Activated naive CD4-positive, alpha-beta T cell treated with anti-CD3 and anti-CD28 coated beads, Interleukin-2, amount 10 ng/mL, durations not matched to agents 7 days and 5 days (primary cell): ENCODE measurements at regions of chr1 and their contacts with region 1.

Region 1: DNA sequence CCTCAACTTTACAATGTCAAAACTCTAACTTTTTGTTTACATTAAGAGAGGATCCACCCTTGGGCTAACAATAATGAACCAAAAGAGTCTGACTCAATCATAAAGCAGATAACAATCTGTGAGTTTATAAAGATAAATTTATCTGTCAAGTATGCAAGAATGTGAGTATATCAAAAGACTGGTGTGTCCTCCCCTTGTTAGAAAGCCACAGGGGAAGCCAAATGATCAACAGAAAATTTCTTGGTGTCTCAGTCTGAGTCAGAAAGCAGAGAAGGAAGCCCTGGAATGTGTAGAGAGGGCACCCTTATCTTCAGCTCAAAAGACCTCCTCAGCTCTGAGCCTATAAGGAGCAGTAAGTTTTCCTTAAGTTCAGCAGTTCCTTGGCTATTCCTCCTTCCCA is 13.9 kb upstream of the PDIK1L start:
- DNase-seq: no peak
- H3K4me3 Mint-ChIP-seq: no peak overlapping the region
- H3K27ac Mint-ChIP-seq: no peak overlapping the region
- H3K4me1 Mint-ChIP-seq: peaks cover 6% of the 10 kb centered on the region
- H3K27me3 Mint-ChIP-seq: peaks cover 53% of the 10 kb centered on the region

Region 2: DNA sequence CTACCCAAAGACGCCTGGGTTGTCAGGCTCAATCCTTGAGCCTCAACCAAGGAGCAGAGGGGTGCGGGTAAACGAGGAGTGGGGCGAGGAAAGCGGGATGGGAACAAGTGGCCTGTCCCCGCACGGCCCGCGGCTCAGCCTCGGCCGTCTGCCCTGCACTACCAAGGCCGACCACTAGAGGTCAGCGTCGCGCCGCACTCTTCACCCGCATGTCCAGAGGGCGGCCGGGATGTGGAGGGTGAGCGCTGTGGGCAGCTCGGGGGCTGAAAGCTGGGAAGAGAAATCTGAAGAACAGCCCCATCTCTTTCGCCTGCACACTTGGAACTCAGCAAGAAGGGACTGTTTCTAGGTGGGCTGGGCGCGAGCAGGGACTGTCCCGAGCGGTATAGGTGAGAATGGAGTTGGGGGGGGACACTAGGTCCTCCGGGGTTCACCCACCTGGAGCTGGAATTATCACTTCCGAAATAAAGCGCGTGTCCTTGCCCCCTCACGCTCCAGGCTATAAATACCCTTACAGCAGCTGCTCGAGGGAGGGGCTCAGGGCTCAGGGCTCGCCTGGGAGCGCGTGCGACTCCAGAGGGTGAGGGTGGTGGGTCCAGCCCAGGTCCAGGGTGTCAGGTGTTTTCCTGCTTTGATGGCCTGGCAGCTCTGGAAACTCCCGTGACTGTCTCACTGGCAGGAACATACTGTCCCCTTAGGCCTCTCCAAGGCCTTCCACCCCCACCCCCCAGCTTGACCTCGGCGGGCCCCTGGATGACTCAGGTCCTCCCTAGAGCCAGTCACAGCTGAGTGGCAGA is 61.5 kb before region 1 on chr1:
- CTCF ChIA-PET with region 1: interaction called, 13 read pairs
- DNase-seq: peak; percentile 82
- H3K4me3 Mint-ChIP-seq: peak overlapping the region; percentile 92
- H3K27ac Mint-ChIP-seq: peak overlapping the region; percentile 75
- H3K4me1 Mint-ChIP-seq: peaks cover 15% of the 10 kb centered on the region
- H3K27me3 Mint-ChIP-seq: peaks cover 83% of the 10 kb centered on the region

Region 3: GRCh38 chr1:26161415-26162219 is 63.9 kb after region 1 on chr1:
- CTCF ChIA-PET with region 1: interaction called, 13 read pairs
- DNase-seq: peak; percentile 69
- H3K4me3 Mint-ChIP-seq: peak overlapping the region; percentile 52
- H3K27ac Mint-ChIP-seq: no peak overlapping the region
- H3K4me1 Mint-ChIP-seq: peaks cover 32% of the 10 kb centered on the region
- H3K27me3 Mint-ChIP-seq: peaks cover 92% of the 10 kb centered on the region

Region 4: DNA sequence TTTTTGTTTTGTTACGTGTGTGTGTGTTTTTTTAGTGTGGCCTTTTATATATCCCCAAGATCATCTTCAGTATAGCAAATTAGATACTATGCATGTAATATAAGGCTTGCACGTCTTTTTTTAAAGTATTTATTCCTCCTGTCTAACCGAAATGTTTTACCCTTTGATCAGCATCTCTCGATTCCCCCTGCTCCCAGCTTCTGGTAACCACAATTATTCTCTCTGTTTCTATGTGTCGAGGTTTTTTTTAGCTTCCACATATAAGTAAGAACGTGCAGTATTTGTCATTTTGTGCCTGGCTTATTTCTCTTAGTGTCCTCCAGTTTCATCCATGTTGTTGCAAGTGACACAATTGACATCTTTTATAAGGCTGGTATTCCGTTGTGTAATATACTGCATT is 155.0 kb after region 1 on chr1:
- CTCF ChIA-PET with region 1: no interaction called
- DNase-seq: no peak
- H3K4me3 Mint-ChIP-seq: no peak overlapping the region
- H3K27ac Mint-ChIP-seq: no peak overlapping the region
- H3K4me1 Mint-ChIP-seq: no peaks in the 10 kb centered on the region
- H3K27me3 Mint-ChIP-seq: no peaks in the 10 kb centered on the region

Region 5: GRCh38 chr1:26321315-26322041 is 223.8 kb after region 1 on chr1:
- CTCF ChIA-PET with region 1: no interaction called
- DNase-seq: peak; percentile 97
- H3K4me3 Mint-ChIP-seq: peak overlapping the region; percentile 90
- H3K27ac Mint-ChIP-seq: peak overlapping the region; percentile 96
- H3K4me1 Mint-ChIP-seq: peaks cover 58% of the 10 kb centered on the region
- H3K27me3 Mint-ChIP-seq: no peaks in the 10 kb centered on the region